Dendritic cell treated with granulocyte-macrophage colony-stimulating factor and Interleukin-4, amounts not matched to agents 40 ng/mL and 50 ng/mL, for 4 days (primary cell): ENCODE measurements at regions of chr14 and their contacts with region 1.

Region 1: GRCh38 chr14:20530771-20531571 is 25.6 kb downstream of the RNASE10 start:
- H3K4me3 Mint-ChIP-seq: no peak overlapping the region
- H3K27ac Mint-ChIP-seq: no peak overlapping the region
- H3K4me1 Mint-ChIP-seq: peaks cover 26% of the 10 kb centered on the region
- H3K27me3 Mint-ChIP-seq: peaks cover 4% of the 10 kb centered on the region

Region 2: GRCh38 chr14:20606190-20606901 is 75.4 kb after region 1 on chr14:
- intact Hi-C with region 1: loop called (anchors 1 kb)
- H3K4me3 Mint-ChIP-seq: no peak overlapping the region
- H3K27ac Mint-ChIP-seq: no peak overlapping the region
- H3K4me1 Mint-ChIP-seq: peaks cover 6% of the 10 kb centered on the region
- H3K27me3 Mint-ChIP-seq: no peaks in the 10 kb centered on the region